Activated T-helper 2 cell treated with anti-CD3 and anti-CD28 coated beads, Interferon-gamma antibody, Interleukin-2, Interleukin-4, amounts not matched to agents 10 μg/mL and 5 μg/mL and 100 μg/mL, durations not matched to agents 14 hours and 24 hours and 36 hours (primary cell): ENCODE measurements at regions of chr6 and their contacts with region 1.

Region 1: DNA sequence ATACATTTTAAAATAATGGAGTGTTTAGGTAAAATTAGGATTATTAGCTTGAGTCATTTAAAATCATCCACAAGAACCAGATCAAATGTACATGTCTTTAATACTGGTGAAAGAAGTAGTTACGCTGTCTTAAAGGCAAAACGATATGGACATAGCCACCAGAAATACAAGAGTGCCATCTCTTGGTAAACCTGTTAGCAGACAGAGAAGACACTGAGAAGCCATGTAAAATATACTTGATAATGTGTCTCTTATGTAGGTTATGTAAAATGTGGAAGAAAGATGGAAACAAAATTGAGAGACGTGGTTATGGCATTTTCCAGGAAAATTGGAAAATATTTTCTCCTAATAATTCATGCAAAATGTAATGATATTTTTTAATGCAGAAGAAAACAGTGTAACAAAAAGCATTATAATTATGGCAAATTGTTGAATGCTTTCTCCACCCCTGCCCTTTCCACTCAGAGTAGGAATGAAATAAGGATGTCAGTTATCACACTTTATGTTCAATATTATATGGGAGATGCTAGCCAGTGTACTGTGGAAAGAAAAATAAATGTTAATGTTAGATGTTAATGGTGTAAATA is 12.2 kb upstream of the SLC17A2 start:
- DNase-seq: no peak
- H3K4me3 Mint-ChIP-seq: no peak overlapping the region
- H3K27ac Mint-ChIP-seq: no peak overlapping the region
- H3K4me1 Mint-ChIP-seq: peaks cover 41% of the 10 kb centered on the region
- H3K27me3 Mint-ChIP-seq: peaks cover 2% of the 10 kb centered on the region

Region 2: DNA sequence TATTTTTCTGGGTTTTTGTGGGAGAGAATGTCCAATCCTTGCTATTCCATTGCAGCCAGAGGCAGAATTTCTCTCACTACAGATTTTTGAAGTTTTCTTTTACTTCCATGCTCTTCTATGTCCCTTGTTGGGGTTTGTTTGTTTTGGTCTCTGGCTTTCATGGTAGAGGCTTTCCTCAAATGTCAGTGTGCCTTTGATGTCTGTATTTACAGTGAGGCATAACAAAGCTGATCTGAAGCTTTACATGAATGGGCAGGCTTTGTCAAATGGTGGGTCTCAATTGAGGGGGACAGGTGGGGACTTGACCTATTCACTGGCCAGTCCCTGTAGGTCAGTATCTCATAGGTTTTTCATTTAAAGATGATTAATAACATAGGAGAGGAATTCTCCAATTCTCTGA is 672.1 kb before region 1 on chr6:
- intact Hi-C with region 1: loop called (anchors 5 kb)
- DNase-seq: no peak
- H3K4me3 Mint-ChIP-seq: no peak overlapping the region
- H3K27ac Mint-ChIP-seq: no peak overlapping the region
- H3K4me1 Mint-ChIP-seq: peaks cover under 1% of the 10 kb centered on the region
- H3K27me3 Mint-ChIP-seq: peaks cover 52% of the 10 kb centered on the region

Region 3: GRCh38 chr6:25777856-25778649 is 164.6 kb before region 1 on chr6:
- intact Hi-C with region 1: loop called (anchors 1 kb)
- DNase-seq: no peak
- H3K4me3 Mint-ChIP-seq: no peak overlapping the region
- H3K27ac Mint-ChIP-seq: peak overlapping the region; percentile 72
- H3K4me1 Mint-ChIP-seq: peaks cover 22% of the 10 kb centered on the region
- H3K27me3 Mint-ChIP-seq: no peaks in the 10 kb centered on the region

Region 4: DNA sequence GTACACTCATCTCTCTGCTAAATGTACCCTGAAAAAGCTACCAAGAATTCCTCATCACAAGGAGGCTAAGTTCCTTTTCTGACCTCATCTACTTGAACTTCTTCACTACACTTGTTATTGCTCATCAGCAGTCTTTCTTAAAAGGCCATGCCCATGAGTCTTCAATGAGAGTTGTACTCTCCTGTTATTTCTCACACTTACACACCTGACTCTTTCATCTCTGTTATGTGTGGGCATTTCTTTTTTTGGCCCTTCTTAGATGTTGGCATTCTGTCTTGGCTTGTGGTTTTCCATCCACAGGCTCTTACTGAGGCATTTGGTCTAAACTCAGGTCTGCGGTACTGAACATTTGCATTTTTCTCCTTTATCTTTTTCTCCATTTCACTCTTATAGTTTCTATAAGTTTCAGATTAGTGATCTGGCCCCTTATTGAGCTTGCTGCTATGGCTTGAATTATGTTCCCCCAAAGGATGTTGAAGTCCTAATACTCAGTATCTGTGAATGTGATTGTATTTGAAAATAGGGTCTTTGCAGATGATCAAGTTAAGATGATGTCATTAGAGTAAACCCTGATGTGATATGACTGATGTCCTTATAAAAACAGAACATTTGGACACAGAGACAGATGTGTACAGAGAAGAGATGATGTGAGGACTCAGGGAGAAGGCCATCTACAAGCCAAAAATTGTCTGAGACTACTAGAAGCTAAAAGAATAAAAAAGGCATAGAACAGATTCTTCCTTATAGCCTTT is 100.0 kb before region 1 on chr6:
- intact Hi-C with region 1: loop called (anchors 1 kb)
- DNase-seq: no peak
- H3K4me3 Mint-ChIP-seq: no peak overlapping the region
- H3K27ac Mint-ChIP-seq: no peak overlapping the region
- H3K4me1 Mint-ChIP-seq: no peaks in the 10 kb centered on the region
- H3K27me3 Mint-ChIP-seq: no peaks in the 10 kb centered on the region

Region 5: DNA sequence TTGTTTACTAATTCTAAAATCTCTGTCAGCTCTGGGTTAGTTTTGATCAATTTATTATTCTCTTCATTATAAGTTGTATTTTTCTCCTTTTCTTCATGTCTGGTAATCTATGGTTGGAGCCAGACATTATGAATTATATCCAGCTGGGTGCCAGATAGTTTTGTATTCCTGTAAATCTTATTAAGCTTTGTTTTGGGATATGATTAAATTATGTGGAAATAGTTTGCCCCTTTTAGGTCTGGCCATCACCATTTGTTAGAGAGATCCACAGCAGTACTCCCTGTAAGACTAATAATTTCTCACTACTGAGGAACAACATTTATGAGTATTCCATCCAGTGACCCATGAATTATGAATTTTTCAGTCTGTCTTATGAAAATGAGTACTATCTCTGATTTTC is 89.9 kb before region 1 on chr6:
- intact Hi-C with region 1: no loop called
- DNase-seq: no peak
- H3K4me3 Mint-ChIP-seq: no peak overlapping the region
- H3K27ac Mint-ChIP-seq: no peak overlapping the region
- H3K4me1 Mint-ChIP-seq: peaks cover 21% of the 10 kb centered on the region
- H3K27me3 Mint-ChIP-seq: peaks cover 3% of the 10 kb centered on the region

Region 6: GRCh38 chr6:25913741-25914140 is 28.9 kb before region 1 on chr6:
- intact Hi-C with region 1: loop called (anchors 2 kb)
- DNase-seq: no peak
- H3K4me3 Mint-ChIP-seq: no peak overlapping the region
- H3K27ac Mint-ChIP-seq: peak overlapping the region; percentile 77
- H3K4me1 Mint-ChIP-seq: peaks cover 40% of the 10 kb centered on the region
- H3K27me3 Mint-ChIP-seq: no peaks in the 10 kb centered on the region

Region 7: GRCh38 chr6:25975923-25976560 is 33.4 kb after region 1 on chr6:
- intact Hi-C with region 1: loop called (anchors 1 kb)
- DNase-seq: no peak
- H3K4me3 Mint-ChIP-seq: no peak overlapping the region
- H3K27ac Mint-ChIP-seq: peak overlapping the region; percentile 49
- H3K4me1 Mint-ChIP-seq: peaks cover 34% of the 10 kb centered on the region
- H3K27me3 Mint-ChIP-seq: no peaks in the 10 kb centered on the region